ENCODE measurements at regions of chr4 and their contacts with region 1.

Region 1: GRCh38 chr4:83455281-83456129 is at the starts of genes HELQ and MRPS18C:
- DNase-seq: peak; percentile 95
- H3K4me3 Mint-ChIP-seq: peak within 1 kb of the TSS; percentile 96
- H3K27ac Mint-ChIP-seq: peak within 1 kb of the TSS; percentile 98
- H3K4me1 Mint-ChIP-seq: peaks cover 45% of the 10 kb centered on the region
- H3K27me3 Mint-ChIP-seq: no peaks in the 10 kb centered on the region
- total RNA-seq, gene HELQ: 8.8 and 9.7 TPM in 2 replicates
- total RNA-seq, gene MRPS18C: 76.8 and 80.3 TPM in 2 replicates

Region 2: GRCh38 chr4:82428969-82429727 is 1026.4 kb before region 1 on chr4:
- intact Hi-C with region 1: loop called (anchors 1 kb)
- DNase-seq: peak; percentile 90
- H3K4me3 Mint-ChIP-seq: peak overlapping the region; percentile 99
- H3K27ac Mint-ChIP-seq: peak overlapping the region; percentile 99
- H3K4me1 Mint-ChIP-seq: peaks cover 69% of the 10 kb centered on the region
- H3K27me3 Mint-ChIP-seq: no peaks in the 10 kb centered on the region

Region 3: DNA sequence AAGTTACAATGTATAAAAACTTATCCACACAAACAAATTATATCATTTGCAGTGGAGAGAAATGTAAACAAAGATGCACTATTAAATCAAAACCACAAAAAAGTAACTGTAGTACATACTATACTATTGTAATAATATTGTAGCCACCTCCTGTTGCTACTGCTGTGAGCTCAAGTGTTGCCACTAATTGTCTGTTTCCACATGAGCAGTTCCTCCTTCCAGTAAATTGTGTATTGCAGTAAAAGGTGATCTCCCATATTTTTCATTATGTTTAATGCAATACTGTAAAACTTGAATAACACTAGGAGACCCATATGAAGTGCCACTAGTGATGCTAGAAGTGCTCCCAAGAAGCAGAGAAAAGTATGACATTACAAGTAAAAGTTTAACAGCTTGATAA is 456.6 kb before region 1 on chr4:
- intact Hi-C with region 1: no loop called
- DNase-seq: no peak
- H3K4me3 Mint-ChIP-seq: no peak overlapping the region
- H3K27ac Mint-ChIP-seq: no peak overlapping the region
- H3K4me1 Mint-ChIP-seq: peaks cover 9% of the 10 kb centered on the region
- H3K27me3 Mint-ChIP-seq: no peaks in the 10 kb centered on the region

Region 4: GRCh38 chr4:83012687-83013419 is 442.7 kb before region 1 on chr4:
- intact Hi-C with region 1: loop called (anchors 1 kb)
- DNase-seq: peak; percentile 97
- H3K4me3 Mint-ChIP-seq: peak overlapping the region; percentile 91
- H3K27ac Mint-ChIP-seq: peak overlapping the region; percentile 92
- H3K4me1 Mint-ChIP-seq: peaks cover 45% of the 10 kb centered on the region
- H3K27me3 Mint-ChIP-seq: no peaks in the 10 kb centered on the region

Region 5: GRCh38 chr4:83217721-83218522 is 237.6 kb before region 1 on chr4:
- intact Hi-C with region 1: loop called (anchors 1 kb)
- DNase-seq: peak; percentile 73
- H3K4me3 Mint-ChIP-seq: peak overlapping the region; percentile 66
- H3K27ac Mint-ChIP-seq: peak overlapping the region; percentile 91
- H3K4me1 Mint-ChIP-seq: peaks cover 81% of the 10 kb centered on the region
- H3K27me3 Mint-ChIP-seq: peaks cover 2% of the 10 kb centered on the region

Region 6: GRCh38 chr4:83340692-83341343 is 114.7 kb before region 1 on chr4:
- intact Hi-C with region 1: loop called (anchors 1 kb)
- DNase-seq: peak; percentile 48
- H3K4me3 Mint-ChIP-seq: peak overlapping the region; percentile 23
- H3K27ac Mint-ChIP-seq: peak overlapping the region; percentile 98
- H3K4me1 Mint-ChIP-seq: peaks cover 30% of the 10 kb centered on the region
- H3K27me3 Mint-ChIP-seq: peaks cover 26% of the 10 kb centered on the region

Region 7: DNA sequence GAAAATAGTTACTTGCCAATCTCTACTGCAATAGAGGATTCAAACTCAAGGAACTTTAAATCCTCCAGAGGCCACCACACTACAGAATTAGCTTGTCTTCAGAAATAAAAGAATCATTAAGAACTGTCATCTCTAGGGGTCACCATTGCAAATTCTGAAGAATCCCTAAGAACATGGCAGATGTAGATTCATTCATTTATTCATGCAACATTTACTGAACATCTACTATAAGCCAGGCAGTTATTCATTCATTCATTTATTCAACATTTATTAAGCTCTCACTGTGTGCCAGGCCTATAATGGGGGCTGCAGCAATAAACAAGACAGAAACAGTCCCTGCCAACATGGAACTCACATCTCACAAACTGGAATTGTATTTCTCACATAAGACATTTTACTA is 815.4 kb after region 1 on chr4:
- intact Hi-C with region 1: no loop called
- DNase-seq: no peak
- H3K4me3 Mint-ChIP-seq: no peak overlapping the region
- H3K27ac Mint-ChIP-seq: no peak overlapping the region
- H3K4me1 Mint-ChIP-seq: no peaks in the 10 kb centered on the region
- H3K27me3 Mint-ChIP-seq: no peaks in the 10 kb centered on the region